B cell (primary cell): ENCODE measurements at regions of chr9 and their contacts with region 1.

Region 1: DNA sequence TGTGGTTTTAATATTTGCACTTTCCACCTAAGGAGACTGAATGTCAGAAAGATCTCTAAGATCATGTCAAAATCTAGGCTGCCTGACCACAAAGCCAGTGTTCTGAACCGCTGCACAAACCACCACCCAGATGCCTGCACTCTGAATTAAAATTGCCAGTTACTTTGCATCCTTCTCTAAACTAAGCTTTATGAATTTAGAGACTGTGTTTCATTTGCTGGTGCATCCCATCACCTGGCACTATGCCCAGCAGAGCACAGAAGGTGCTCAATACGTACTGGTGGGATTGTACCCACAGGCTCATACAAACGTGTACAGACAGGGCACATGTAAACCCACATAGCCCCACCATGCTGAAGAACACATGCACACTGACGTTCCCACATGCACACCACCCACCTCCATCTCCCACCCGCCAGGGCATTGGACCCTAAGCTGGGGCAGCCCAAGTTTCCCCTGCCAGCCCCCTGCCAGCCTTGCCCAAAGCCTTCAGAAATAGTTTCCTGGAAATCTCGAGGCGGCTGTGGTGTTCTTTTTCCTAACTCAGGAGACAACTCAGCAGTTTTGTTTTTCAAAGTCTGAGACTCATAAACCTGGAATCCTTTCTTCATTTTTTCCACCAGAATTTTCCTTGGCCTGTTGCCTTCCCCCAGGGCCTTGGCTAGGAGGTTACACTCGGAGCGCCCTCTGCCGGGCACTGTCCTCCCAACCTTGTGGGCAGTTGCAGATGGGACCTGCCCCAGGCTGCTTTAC is 9.6 kb upstream of the TRAF1 start:
- DNase-seq: peak; percentile 85
- ATAC-seq: peak; percentile 54
- H3K4me3 ChIP-seq: peak overlapping the region in 2 of 5 experiments; percentile 18 to 29
- H3K4me3 Mint-ChIP-seq: peak overlapping the region; percentile 61
- H3K27ac ChIP-seq: peak overlapping the region in 1 of 2 donors; percentile 55
- H3K27ac Mint-ChIP-seq: peak overlapping the region; percentile 44
- H3K4me1 ChIP-seq: peaks cover 58% of the 10 kb centered on the region in 2 donors
- H3K4me1 Mint-ChIP-seq: peaks cover 55% of the 10 kb centered on the region
- H3K27me3 ChIP-seq: no peaks in the 10 kb centered on the region
- H3K27me3 Mint-ChIP-seq: no peaks in the 10 kb centered on the region
- CTCF ChIP-seq: peak; percentile 88

Region 2: DNA sequence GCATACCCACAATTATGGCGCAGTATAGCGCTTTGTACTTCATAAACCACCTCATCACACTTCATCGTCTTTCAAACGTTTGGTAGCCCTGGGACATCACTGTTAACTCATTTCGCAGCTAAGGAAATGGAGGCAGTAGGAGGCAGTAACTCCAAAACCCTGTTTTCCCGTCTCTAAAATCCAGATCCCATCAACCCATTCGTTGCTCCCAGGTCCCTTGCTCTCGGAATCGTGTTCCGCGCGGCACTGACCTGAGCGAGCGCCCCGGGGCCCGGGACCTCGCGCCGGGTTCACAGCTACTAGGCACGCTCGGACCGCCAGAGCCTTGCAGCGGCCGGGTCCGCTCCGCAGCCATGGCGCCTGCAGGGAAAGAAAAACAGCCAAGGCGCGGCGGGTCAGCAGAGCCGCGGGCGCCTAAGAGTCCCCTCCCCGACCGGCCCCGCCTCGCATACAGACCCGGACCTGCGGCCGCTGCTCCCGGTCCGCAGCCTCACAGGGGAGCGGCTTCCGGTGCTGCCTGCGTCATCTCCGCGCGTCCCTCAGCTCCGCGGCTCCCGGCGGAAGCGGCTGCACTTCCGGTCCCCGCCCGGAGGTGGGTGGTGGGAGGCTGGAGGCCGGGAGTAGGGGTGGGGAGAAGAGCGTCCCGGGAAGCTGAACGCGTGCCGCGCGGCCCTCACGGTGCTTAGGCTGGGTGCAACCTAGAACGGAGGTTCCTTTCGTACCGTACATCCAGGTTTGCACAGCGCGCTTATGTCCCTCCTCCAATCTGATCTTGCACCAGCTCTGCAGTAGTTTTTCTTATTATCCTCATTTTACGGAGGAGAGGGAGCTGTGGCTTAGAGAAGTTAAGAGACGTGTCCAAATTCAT is 143.1 kb before region 1 on chr9 and contains the start of gene FBXW2:
- CTCF ChIA-PET with region 1: interaction called, 6 read pairs
- POLR2A ChIA-PET with region 1: interaction called, 5 read pairs
- intact Hi-C with region 1: loop called (anchors 1 kb)
- DNase-seq: peak; percentile 88
- ATAC-seq: peak; percentile 94
- H3K4me3 ChIP-seq: peak within 1 kb of the TSS; percentile 73 to 96 (median 89)
- H3K4me3 Mint-ChIP-seq: peak within 1 kb of the TSS; percentile 92
- H3K27ac ChIP-seq: peak within 1 kb of the TSS; percentile 77 to 87
- H3K27ac Mint-ChIP-seq: peak within 1 kb of the TSS; percentile 92
- H3K4me1 ChIP-seq: peaks cover 18 to 25% of the 10 kb centered on the region in 2 donors
- H3K4me1 Mint-ChIP-seq: peaks cover 38% of the 10 kb centered on the region
- H3K27me3 ChIP-seq: no peaks in the 10 kb centered on the region
- H3K27me3 Mint-ChIP-seq: no peaks in the 10 kb centered on the region
- CTCF ChIP-seq: no peak
- total RNA-seq, gene FBXW2: 70.6 and 73.3 TPM in 2 replicates

Region 3: DNA sequence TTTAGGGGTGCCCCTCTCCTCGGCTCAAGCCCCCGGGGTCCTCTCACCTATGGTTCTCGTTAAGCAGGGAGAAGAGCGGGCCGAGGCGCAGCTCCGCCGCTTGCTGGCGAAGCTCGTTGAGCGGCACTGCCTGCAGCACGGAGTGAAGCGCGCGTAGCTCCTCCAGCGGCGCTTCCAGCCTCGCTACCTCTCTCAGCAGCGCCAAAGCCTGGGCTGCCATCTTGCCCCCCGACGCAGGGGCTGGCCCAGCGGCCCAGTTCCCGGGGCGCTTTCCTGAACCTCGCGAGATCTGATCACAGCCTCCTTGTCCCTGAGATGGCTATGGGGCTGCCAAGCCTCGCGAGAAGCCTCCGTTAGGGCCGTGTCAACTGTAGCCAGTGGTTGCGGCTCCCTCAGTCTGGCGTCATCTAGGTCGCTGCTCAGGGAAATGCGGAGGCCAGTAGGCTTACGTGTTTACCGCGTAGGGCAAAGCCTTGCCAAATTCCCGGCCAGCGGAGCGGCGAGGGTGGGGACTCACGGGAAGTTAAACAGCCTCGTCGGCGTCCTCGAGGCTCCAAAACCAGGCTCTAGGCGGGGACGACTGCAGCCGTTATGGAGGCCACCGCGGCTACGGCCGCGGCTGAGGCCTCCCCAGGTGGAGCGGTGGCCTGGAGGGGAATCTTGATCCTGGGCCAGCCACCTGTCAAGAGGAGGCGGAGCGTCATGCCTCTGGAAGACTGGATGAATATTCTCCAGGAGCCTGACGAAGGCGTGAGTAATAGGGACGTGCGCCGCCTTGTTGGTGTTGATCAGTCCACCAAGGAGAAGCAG is 93.3 kb before region 1 on chr9 and contains the start of gene PSMD5:
- CTCF ChIA-PET with region 1: interaction called, 4 read pairs
- POLR2A ChIA-PET with region 1: no interaction called
- intact Hi-C with region 1: loop called (anchors 1 kb)
- DNase-seq: peak; percentile 96
- ATAC-seq: peak; percentile 98
- H3K4me3 ChIP-seq: peak within 1 kb of the TSS; percentile 68 to 99 (median 82)
- H3K4me3 Mint-ChIP-seq: peak within 1 kb of the TSS; percentile 90
- H3K27ac ChIP-seq: peak within 1 kb of the TSS; percentile 89
- H3K27ac Mint-ChIP-seq: peak within 1 kb of the TSS; percentile 95
- H3K4me1 ChIP-seq: peaks cover 21 to 23% of the 10 kb centered on the region in 2 donors
- H3K4me1 Mint-ChIP-seq: peaks cover 27% of the 10 kb centered on the region
- H3K27me3 ChIP-seq: no peaks in the 10 kb centered on the region
- H3K27me3 Mint-ChIP-seq: no peaks in the 10 kb centered on the region
- CTCF ChIP-seq: no peak
- total RNA-seq, gene PSMD5: 25.3 and 26.8 TPM in 2 replicates

Region 4: GRCh38 chr9:120875954-120876841 is 60.0 kb before region 1 on chr9:
- CTCF ChIA-PET with region 1: interaction called, 102 read pairs
- POLR2A ChIA-PET with region 1: interaction called, 5 read pairs
- intact Hi-C with region 1: loop called (anchors 1 kb)
- DNase-seq: peak; percentile 77
- ATAC-seq: peak; percentile 72
- H3K4me3 ChIP-seq: peak overlapping the region; percentile 45 to 83 (median 70)
- H3K4me3 Mint-ChIP-seq: peak overlapping the region; percentile 86
- H3K27ac ChIP-seq: peak overlapping the region; percentile 69 to 71
- H3K27ac Mint-ChIP-seq: peak overlapping the region; percentile 80
- H3K4me1 ChIP-seq: peaks cover 27 to 33% of the 10 kb centered on the region in 2 donors
- H3K4me1 Mint-ChIP-seq: peaks cover 39% of the 10 kb centered on the region
- H3K27me3 ChIP-seq: peaks cover 0 to 3% (median 0%) of the 10 kb centered on the region in 4 experiments
- H3K27me3 Mint-ChIP-seq: peaks cover 9% of the 10 kb centered on the region
- CTCF ChIP-seq: peak; percentile 15

Region 5: GRCh38 chr9:120886490-120886967 is 49.7 kb before region 1 on chr9:
- CTCF ChIA-PET with region 1: interaction called, 14 read pairs
- POLR2A ChIA-PET with region 1: interaction called, 10 read pairs
- intact Hi-C with region 1: no loop called
- DNase-seq: no peak
- ATAC-seq: no peak
- H3K4me3 ChIP-seq: no peak overlapping the region
- H3K4me3 Mint-ChIP-seq: no peak overlapping the region
- H3K27ac ChIP-seq: no peak overlapping the region
- H3K27ac Mint-ChIP-seq: no peak overlapping the region
- H3K4me1 ChIP-seq: peaks cover 23 to 25% of the 10 kb centered on the region in 2 donors
- H3K4me1 Mint-ChIP-seq: peaks cover 26% of the 10 kb centered on the region
- H3K27me3 ChIP-seq: no peaks in the 10 kb centered on the region
- H3K27me3 Mint-ChIP-seq: peaks cover 6% of the 10 kb centered on the region
- CTCF ChIP-seq: no peak

Region 6: DNA sequence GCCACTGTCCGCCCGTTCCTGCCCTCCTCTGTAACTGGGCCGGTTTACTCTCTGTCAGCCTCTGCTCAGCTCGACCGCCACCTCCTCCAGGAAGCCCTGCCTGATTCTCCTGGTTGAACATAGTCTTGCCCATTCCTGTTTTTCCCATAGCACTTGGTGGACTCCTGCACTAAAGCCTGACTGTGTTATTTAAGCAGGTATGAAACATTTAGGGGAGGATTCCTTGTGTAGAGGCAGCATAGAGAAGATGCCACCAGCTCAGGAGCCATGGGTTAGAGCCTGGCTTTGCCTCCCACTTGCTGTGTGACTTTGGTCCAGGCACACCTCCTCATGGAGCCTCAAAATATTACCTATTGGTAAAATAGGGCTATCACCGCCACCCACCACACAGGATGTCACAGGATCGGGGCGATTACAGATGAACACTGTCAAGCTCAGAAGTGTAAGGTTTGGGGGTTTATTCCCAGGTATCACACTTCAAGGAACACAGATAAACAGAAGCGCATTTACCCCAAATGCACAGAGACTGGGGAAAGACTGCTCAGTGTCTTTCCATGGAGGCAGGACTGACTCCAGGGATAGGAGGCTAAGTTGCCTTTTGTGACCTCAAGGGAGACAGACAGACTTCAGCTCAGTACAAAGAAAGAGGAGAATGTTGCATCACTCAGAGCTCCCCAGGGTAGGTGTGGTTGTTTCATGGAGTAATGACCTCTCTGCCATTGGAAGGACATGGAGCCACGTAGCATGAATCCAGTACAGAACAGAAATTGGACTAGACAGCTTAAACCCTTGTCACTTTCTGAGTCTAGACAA is 16.3 kb before region 1 on chr9:
- CTCF ChIA-PET with region 1: interaction called, 11 read pairs
- POLR2A ChIA-PET with region 1: interaction called, 4 read pairs
- intact Hi-C with region 1: loop called (anchors 2 kb)
- DNase-seq: no peak
- ATAC-seq: no peak
- H3K4me3 ChIP-seq: no peak overlapping the region
- H3K4me3 Mint-ChIP-seq: no peak overlapping the region
- H3K27ac ChIP-seq: no peak overlapping the region
- H3K27ac Mint-ChIP-seq: no peak overlapping the region
- H3K4me1 ChIP-seq: peaks cover 14 to 43% of the 10 kb centered on the region in 2 donors
- H3K4me1 Mint-ChIP-seq: peaks cover 50% of the 10 kb centered on the region
- H3K27me3 ChIP-seq: no peaks in the 10 kb centered on the region
- H3K27me3 Mint-ChIP-seq: no peaks in the 10 kb centered on the region
- CTCF ChIP-seq: no peak

Region 7: GRCh38 chr9:121085661-121086060 is 149.5 kb after region 1 on chr9:
- CTCF ChIA-PET with region 1: no interaction called
- POLR2A ChIA-PET with region 1: no interaction called
- intact Hi-C with region 1: no loop called
- DNase-seq: no peak
- ATAC-seq: no peak
- H3K4me3 ChIP-seq: no peak overlapping the region
- H3K4me3 Mint-ChIP-seq: no peak overlapping the region
- H3K27ac ChIP-seq: no peak overlapping the region
- H3K27ac Mint-ChIP-seq: no peak overlapping the region
- H3K4me1 ChIP-seq: peaks cover 12 to 18% of the 10 kb centered on the region in 2 donors
- H3K4me1 Mint-ChIP-seq: peaks cover 31% of the 10 kb centered on the region
- H3K27me3 ChIP-seq: no peaks in the 10 kb centered on the region
- H3K27me3 Mint-ChIP-seq: no peaks in the 10 kb centered on the region
- CTCF ChIP-seq: no peak